ENCODE measurements at regions of chr1 and their contacts with region 1.

Region 1: GRCh38 chr1:150149271-150150132 is at the start of gene PLEKHO1:
- DNase-seq: peak; percentile 72 to 92 (median 79)
- H3K4me3 ChIP-seq: peak within 1 kb of the TSS; percentile 77 to 87
- H3K4me3 Mint-ChIP-seq: peak within 1 kb of the TSS; percentile 94 to 99 (median 98)
- H3K27ac ChIP-seq: peak within 1 kb of the TSS; percentile 81
- H3K27ac Mint-ChIP-seq: peak within 1 kb of the TSS; percentile 95 to 99 (median 98)
- H3K4me1 ChIP-seq: peaks cover 52% of the 10 kb centered on the region
- H3K4me1 Mint-ChIP-seq: peaks cover 53 to 83% (median 68%) of the 10 kb centered on the region in 4 donors
- H3K27me3 ChIP-seq: no peaks in the 10 kb centered on the region
- H3K27me3 Mint-ChIP-seq: no peaks in the 10 kb centered on the region
- total RNA-seq, gene PLEKHO1: 154 TPM

Region 2: GRCh38 chr1:150034336-150034735 is 115.2 kb before region 1 on chr1:
- CTCF ChIA-PET with region 1: no interaction called
- POLR2A ChIA-PET with region 1: no interaction called
- intact Hi-C with region 1: no loop called
- DNase-seq: no peak
- H3K4me3 ChIP-seq: no peak overlapping the region
- H3K4me3 Mint-ChIP-seq: no peak overlapping the region
- H3K27ac ChIP-seq: no peak overlapping the region
- H3K27ac Mint-ChIP-seq: no peak overlapping the region
- H3K4me1 ChIP-seq: no peaks in the 10 kb centered on the region
- H3K4me1 Mint-ChIP-seq: no peaks in the 10 kb centered on the region
- H3K27me3 ChIP-seq: no peaks in the 10 kb centered on the region
- H3K27me3 Mint-ChIP-seq: no peaks in the 10 kb centered on the region

Region 3: DNA sequence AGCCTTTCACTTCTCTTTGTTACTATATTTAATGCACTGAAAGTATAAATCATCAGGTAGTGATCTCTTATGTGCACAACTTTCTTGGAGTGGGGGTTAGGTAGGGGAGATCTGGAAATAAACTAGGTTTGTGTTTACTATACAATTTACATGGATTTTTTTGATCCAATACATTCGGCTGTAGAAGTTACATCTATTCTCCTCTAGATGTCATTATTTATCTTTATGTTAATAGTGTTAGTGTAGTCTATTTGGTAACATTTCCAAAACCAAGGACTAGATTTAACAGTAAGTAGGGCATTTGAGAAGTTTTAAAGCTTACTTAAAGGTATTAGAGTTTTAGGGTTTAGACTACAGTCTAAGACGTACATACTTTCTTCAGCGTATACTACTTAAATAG is 76.5 kb before region 1 on chr1:
- CTCF ChIA-PET with region 1: interaction called, 574 read pairs
- POLR2A ChIA-PET with region 1: interaction called, 100 read pairs
- intact Hi-C with region 1: no loop called
- DNase-seq: peak in 4 of 5 donors; percentile 45 to 59 (median 50)
- H3K4me3 ChIP-seq: no peak overlapping the region
- H3K4me3 Mint-ChIP-seq: no peak overlapping the region
- H3K27ac ChIP-seq: no peak overlapping the region
- H3K27ac Mint-ChIP-seq: peak overlapping the region in 4 of 7 donors; percentile 1 to 76 (median 66)
- H3K4me1 ChIP-seq: peaks cover 29% of the 10 kb centered on the region
- H3K4me1 Mint-ChIP-seq: peaks cover 35 to 47% (median 40%) of the 10 kb centered on the region in 4 donors
- H3K27me3 ChIP-seq: no peaks in the 10 kb centered on the region
- H3K27me3 Mint-ChIP-seq: no peaks in the 10 kb centered on the region

Region 4: GRCh38 chr1:150106341-150106740 is 43.2 kb before region 1 on chr1:
- CTCF ChIA-PET with region 1: interaction called, 9 read pairs
- POLR2A ChIA-PET with region 1: interaction called, 179 read pairs
- intact Hi-C with region 1: loop called (anchors 1 kb)
- DNase-seq: peak; percentile 58 to 72 (median 66)
- H3K4me3 ChIP-seq: no peak overlapping the region
- H3K4me3 Mint-ChIP-seq: peak overlapping the region; percentile 71 to 90 (median 86)
- H3K27ac ChIP-seq: peak overlapping the region; percentile 25
- H3K27ac Mint-ChIP-seq: peak overlapping the region; percentile 92 to 98 (median 94)
- H3K4me1 ChIP-seq: peaks cover 83% of the 10 kb centered on the region
- H3K4me1 Mint-ChIP-seq: peaks cover 64 to 92% (median 75%) of the 10 kb centered on the region in 4 donors
- H3K27me3 ChIP-seq: no peaks in the 10 kb centered on the region
- H3K27me3 Mint-ChIP-seq: no peaks in the 10 kb centered on the region

Region 5: GRCh38 chr1:150121236-150121862 is 28.2 kb before region 1 on chr1:
- CTCF ChIA-PET with region 1: interaction called, 3 read pairs
- POLR2A ChIA-PET with region 1: interaction called, 44 read pairs
- intact Hi-C with region 1: no loop called
- DNase-seq: no peak
- H3K4me3 ChIP-seq: no peak overlapping the region
- H3K4me3 Mint-ChIP-seq: no peak overlapping the region
- H3K27ac ChIP-seq: no peak overlapping the region
- H3K27ac Mint-ChIP-seq: peak overlapping the region in 6 of 7 donors; percentile 1 to 65 (median 47)
- H3K4me1 ChIP-seq: peaks cover 12% of the 10 kb centered on the region
- H3K4me1 Mint-ChIP-seq: peaks cover 21 to 39% (median 29%) of the 10 kb centered on the region in 4 donors
- H3K27me3 ChIP-seq: no peaks in the 10 kb centered on the region
- H3K27me3 Mint-ChIP-seq: no peaks in the 10 kb centered on the region

Region 6: GRCh38 chr1:150162862-150163706 is 13.6 kb after region 1 on chr1:
- CTCF ChIA-PET with region 1: interaction called, 18 read pairs
- POLR2A ChIA-PET with region 1: interaction called, 112 read pairs
- intact Hi-C with region 1: loop called (anchors 1 kb)
- DNase-seq: no peak
- H3K4me3 ChIP-seq: no peak overlapping the region
- H3K4me3 Mint-ChIP-seq: peak overlapping the region in 5 of 8 donors; percentile 0 to 61 (median 34)
- H3K27ac ChIP-seq: no peak overlapping the region
- H3K27ac Mint-ChIP-seq: peak overlapping the region in 5 of 7 donors; percentile 34 to 83 (median 53)
- H3K4me1 ChIP-seq: peaks cover 40% of the 10 kb centered on the region
- H3K4me1 Mint-ChIP-seq: peaks cover 34 to 52% (median 42%) of the 10 kb centered on the region in 4 donors
- H3K27me3 ChIP-seq: no peaks in the 10 kb centered on the region
- H3K27me3 Mint-ChIP-seq: no peaks in the 10 kb centered on the region

Region 7: DNA sequence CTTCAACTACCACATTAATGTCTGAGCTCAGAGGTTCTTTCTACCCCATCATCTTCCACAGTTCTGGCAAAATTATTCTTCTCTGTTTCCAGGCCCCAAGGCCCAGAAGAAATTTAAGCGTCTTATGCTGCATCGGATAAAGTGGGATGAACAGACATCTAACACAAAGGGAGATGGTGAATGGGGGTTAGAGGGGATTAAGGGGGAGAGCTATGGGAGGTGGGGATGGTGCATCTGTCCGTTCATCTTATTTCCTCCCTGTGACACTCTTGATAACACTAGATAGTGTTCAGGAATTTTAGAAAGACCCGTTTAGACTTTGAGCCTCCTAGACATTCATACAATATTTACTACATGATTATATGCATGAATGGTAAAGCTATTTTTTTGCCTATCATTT is 196.8 kb after region 1 on chr1:
- CTCF ChIA-PET with region 1: no interaction called
- POLR2A ChIA-PET with region 1: no interaction called
- intact Hi-C with region 1: no loop called
- DNase-seq: no peak
- H3K4me3 ChIP-seq: no peak overlapping the region
- H3K4me3 Mint-ChIP-seq: no peak overlapping the region
- H3K27ac ChIP-seq: no peak overlapping the region
- H3K27ac Mint-ChIP-seq: peak overlapping the region in 3 of 7 donors; percentile 11 to 88 (median 16)
- H3K4me1 ChIP-seq: no peaks in the 10 kb centered on the region
- H3K4me1 Mint-ChIP-seq: no peaks in the 10 kb centered on the region
- H3K27me3 ChIP-seq: no peaks in the 10 kb centered on the region
- H3K27me3 Mint-ChIP-seq: no peaks in the 10 kb centered on the region